ENCODE measurements at regions of chr5 and their contacts with region 1.

Region 1: DNA sequence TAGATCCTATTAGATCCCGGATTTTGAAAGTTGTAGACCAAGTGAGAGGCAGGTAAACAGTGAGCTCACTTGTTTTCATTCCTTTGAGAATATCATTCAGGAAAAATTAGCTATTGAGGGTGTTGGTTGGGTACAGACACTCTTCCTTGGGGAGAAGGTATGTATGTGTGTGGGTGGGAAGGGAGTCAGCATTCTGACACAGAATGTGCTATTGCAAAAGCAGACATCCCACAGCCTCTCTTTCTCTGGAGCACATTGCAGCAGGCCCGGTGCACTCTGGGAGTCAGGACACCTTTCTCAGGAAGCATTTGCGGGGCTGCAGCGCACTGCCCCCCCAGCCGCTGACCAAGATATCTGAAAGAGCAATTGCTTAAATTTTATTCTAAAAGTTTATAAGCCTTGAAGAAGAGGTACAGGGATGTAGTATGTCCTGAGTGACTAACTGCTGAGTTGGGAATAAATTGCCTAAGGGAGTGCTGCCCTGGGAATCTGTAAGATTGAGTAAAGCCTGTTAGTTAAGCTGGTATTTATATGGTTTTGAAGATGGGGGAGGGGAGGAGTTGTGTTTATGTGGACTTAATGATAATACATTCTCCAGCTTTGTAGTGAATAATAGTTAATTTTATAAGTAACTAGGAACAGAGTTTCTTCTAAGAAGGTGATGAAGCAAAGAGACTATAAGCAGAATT is 5.2 kb downstream of the TNFAIP8 start:
- DNase-seq: peak; percentile 95
- H3K4me3 Mint-ChIP-seq: peak overlapping the region; percentile 44
- H3K27ac Mint-ChIP-seq: peak overlapping the region; percentile 80
- H3K4me1 Mint-ChIP-seq: peaks cover 81% of the 10 kb centered on the region
- H3K27me3 Mint-ChIP-seq: no peaks in the 10 kb centered on the region
- CTCF ChIP-seq: no peak

Region 2: DNA sequence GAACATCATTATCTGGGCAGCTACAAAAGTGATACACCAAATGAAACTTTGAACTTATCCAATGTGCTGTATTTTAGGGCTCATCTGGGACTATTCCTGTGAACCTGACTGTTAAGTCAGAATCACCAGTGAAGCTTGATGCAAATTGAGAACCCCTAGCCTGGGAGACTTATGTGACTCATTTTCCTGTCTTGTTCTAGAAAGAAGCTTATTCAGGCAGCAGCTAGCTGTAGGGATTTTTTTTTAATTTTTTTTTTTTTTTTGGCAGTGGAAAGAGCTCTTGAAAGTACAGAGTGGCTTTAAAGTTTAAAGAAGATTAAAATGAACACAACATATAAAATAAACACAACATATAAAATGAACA is 86.3 kb before region 1 on chr5:
- CTCF ChIA-PET with region 1: interaction called, 5 read pairs
- POLR2A ChIA-PET with region 1: interaction called, 41 read pairs
- intact Hi-C with region 1: no loop called
- DNase-seq: peak; percentile 80
- H3K4me3 Mint-ChIP-seq: no peak overlapping the region
- H3K27ac Mint-ChIP-seq: peak overlapping the region; percentile 80
- H3K4me1 Mint-ChIP-seq: peaks cover 35% of the 10 kb centered on the region
- H3K27me3 Mint-ChIP-seq: no peaks in the 10 kb centered on the region
- CTCF ChIP-seq: no peak

Region 3: DNA sequence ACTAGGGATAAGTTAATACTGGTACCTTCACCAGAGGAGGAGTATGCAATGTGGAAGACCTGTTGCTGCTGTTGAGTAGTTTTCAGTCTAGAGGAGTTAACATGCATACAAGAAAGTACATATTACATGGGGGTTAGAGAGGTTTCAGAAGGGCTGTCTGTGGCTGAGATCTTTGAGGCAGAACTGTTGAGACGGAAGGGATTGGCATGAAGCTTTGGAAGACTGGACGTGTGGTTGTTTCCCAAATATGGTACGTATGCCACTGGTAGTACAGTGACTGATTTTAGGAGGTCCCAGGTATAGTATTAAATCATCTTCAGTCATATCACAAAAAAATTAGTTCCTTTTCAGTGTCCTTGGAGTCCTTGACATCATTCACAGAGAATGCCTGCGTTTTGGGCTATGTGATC is 12.4 kb after region 1 on chr5:
- CTCF ChIA-PET with region 1: interaction called, 11 read pairs
- POLR2A ChIA-PET with region 1: interaction called, 38 read pairs
- intact Hi-C with region 1: no loop called
- DNase-seq: no peak
- H3K4me3 Mint-ChIP-seq: no peak overlapping the region
- H3K27ac Mint-ChIP-seq: no peak overlapping the region
- H3K4me1 Mint-ChIP-seq: peaks cover 8% of the 10 kb centered on the region
- H3K27me3 Mint-ChIP-seq: no peaks in the 10 kb centered on the region
- CTCF ChIP-seq: no peak

Region 4: DNA sequence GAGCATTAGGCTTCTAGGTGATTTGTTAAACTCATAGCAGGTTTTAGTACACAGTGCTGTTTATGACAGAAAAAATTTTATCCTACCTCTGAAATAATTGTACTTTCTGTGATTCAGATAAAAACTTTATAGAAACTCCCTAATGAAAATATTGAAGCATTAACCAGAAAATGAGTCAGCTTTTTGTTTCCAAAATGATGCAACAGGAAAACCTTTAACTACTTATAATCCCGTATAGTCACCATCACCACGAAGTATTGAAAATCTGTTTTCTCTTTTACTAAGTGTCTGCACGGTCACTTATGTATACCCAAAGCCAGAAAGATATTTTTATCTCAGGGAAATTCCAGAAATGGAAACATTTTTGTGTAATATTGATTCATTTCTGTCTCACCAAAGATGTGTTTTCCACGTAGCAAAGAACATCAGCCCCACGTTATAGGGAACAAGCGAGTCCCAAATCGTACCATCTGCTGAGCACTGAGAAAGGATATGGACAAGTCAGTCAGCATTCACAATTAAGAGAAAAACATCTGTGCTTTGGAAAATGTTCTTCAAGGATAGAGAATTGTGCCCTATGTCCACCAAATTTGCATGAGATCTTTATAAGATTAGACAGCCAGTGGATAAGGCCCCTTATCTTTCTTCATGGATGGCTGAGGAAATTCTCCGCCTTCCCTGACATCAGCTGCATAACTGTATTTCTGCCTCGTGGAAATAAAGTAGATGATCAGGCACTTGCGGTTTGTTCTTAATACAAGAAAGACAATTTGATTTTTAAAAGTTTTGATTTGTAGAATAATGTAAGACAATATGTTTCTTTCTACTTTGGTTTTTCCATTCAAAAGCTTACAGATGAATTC is 36.7 kb after region 1 on chr5:
- CTCF ChIA-PET with region 1: interaction called, 40 read pairs
- POLR2A ChIA-PET with region 1: interaction called, 492 read pairs
- intact Hi-C with region 1: no loop called
- DNase-seq: peak; percentile 87
- H3K4me3 Mint-ChIP-seq: peak overlapping the region; percentile 63
- H3K27ac Mint-ChIP-seq: peak overlapping the region; percentile 94
- H3K4me1 Mint-ChIP-seq: peaks cover 48% of the 10 kb centered on the region
- H3K27me3 Mint-ChIP-seq: no peaks in the 10 kb centered on the region
- CTCF ChIP-seq: no peak